ENCODE measurements at regions of chr12 and their contacts with region 1.

Region 1: GRCh38 chr12:110826592-110827200 is 20.1 kb upstream of the CCDC63 start:
- DNase-seq: peak; percentile 84 to 92 (median 90)
- ATAC-seq: peak; percentile 99
- H3K4me3 ChIP-seq: peak overlapping the region; percentile 17; the same call in 1 of the 2 replicates
- H3K27ac ChIP-seq: no peak overlapping the region; the same call in 2 of the 3 replicates
- H3K4me1 ChIP-seq: peaks cover 4% of the 10 kb centered on the region in 2 experiments; a peak in 2 of 5 replicates
- H3K27me3 ChIP-seq: peaks cover 9 to 42% of the 10 kb centered on the region in 2 experiments; a peak in 3 of 5 replicates
- CTCF ChIP-seq: peak; percentile 99
- EP300 ChIP-seq: no peak
- POLR2A ChIP-seq: no peak
- RAD21 ChIP-seq: peak; percentile 97 to 98

Region 2: DNA sequence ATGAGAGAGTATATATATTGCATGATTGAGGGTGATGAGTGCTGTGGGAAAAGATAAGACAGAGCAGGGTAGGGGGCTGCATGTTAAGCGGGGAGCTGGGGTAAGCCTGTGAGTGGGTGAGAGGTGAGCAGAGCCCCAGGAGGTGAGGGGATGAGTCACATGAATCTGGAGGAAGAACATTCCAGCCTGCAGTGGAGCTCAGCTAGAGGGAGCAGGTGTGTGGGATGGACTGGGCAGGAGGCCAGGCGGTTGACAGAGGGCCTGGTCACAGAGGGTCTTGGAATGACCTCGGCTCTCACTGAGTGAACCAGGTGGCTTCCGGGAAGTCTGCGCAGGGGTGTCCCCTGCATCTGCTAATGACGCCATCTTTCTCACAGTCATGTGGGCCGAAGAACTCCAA is 874.9 kb before region 1 on chr12:
- CTCF ChIA-PET with region 1: no interaction called
- POLR2A ChIA-PET with region 1: no interaction called
- in situ Hi-C with region 1: no loop called
- intact Hi-C with region 1: no loop called
- DNase-seq: no peak
- ATAC-seq: no peak
- H3K4me3 ChIP-seq: no peak overlapping the region
- H3K27ac ChIP-seq: no peak overlapping the region
- H3K4me1 ChIP-seq: no peaks in the 10 kb centered on the region
- H3K27me3 ChIP-seq: no peaks in the 10 kb centered on the region
- CTCF ChIP-seq: no peak
- EP300 ChIP-seq: no peak
- POLR2A ChIP-seq: no peak
- RAD21 ChIP-seq: no peak

Region 3: DNA sequence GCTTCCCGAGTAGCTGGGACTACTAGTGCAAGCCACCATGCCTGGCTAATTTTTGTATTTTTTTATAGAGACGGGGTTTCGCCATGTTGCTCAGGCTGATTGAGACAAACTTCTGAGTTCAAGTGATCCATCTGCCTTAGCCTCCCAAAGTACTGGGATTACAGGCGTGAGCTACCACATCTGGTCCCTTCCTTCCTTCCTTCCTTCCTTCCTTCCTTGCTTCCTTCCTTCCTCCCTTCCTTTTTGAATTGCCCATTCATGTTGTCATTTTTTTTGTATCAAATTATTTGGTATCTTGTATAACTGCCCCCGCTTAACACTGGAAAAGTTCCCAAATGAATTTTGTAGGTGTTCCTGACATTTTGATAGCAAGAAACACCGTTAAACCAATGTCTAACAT is 312.9 kb before region 1 on chr12:
- CTCF ChIA-PET with region 1: interaction called, 5 read pairs
- POLR2A ChIA-PET with region 1: no interaction called
- in situ Hi-C with region 1: no loop called
- intact Hi-C with region 1: loop called (anchors 5 kb)
- DNase-seq: no peak
- ATAC-seq: no peak
- H3K4me3 ChIP-seq: no peak overlapping the region
- H3K27ac ChIP-seq: no peak overlapping the region
- H3K4me1 ChIP-seq: no peaks in the 10 kb centered on the region; a peak in 1 of 5 replicates
- H3K27me3 ChIP-seq: no peaks in the 10 kb centered on the region
- CTCF ChIP-seq: no peak
- EP300 ChIP-seq: no peak
- POLR2A ChIP-seq: no peak
- RAD21 ChIP-seq: no peak

Region 4: GRCh38 chr12:110613771-110614684 is 212.7 kb before region 1 on chr12 and contains the start of gene TCTN1:
- CTCF ChIA-PET with region 1: no interaction called
- POLR2A ChIA-PET with region 1: no interaction called
- in situ Hi-C with region 1: loop called (anchors 10 kb)
- intact Hi-C with region 1: loop called (anchors 5 kb)
- DNase-seq: peak; percentile 96 to 98 (median 98)
- ATAC-seq: peak; percentile 99
- H3K4me3 ChIP-seq: peak within 1 kb of the TSS; percentile 49
- H3K27ac ChIP-seq: peak within 1 kb of the TSS; percentile 11; the same call in 2 of the 3 replicates
- H3K4me1 ChIP-seq: peaks cover 3 to 14% of the 10 kb centered on the region in 2 experiments; a peak in 4 of 5 replicates
- H3K27me3 ChIP-seq: no peaks in the 10 kb centered on the region
- CTCF ChIP-seq: no peak
- EP300 ChIP-seq: no peak
- POLR2A ChIP-seq: peak; percentile 83
- RAD21 ChIP-seq: no peak
- polyA plus RNA-seq, gene TCTN1: 0.32 to 0.98 TPM

Region 5: GRCh38 chr12:110647631-110648040 is 179.1 kb before region 1 on chr12:
- CTCF ChIA-PET with region 1: interaction called, 4 read pairs
- POLR2A ChIA-PET with region 1: no interaction called
- in situ Hi-C with region 1: no loop called
- intact Hi-C with region 1: loop called (anchors 1 kb)
- DNase-seq: no peak
- ATAC-seq: no peak
- H3K4me3 ChIP-seq: no peak overlapping the region
- H3K27ac ChIP-seq: no peak overlapping the region
- H3K4me1 ChIP-seq: no peaks in the 10 kb centered on the region
- H3K27me3 ChIP-seq: peaks cover 10 to 29% of the 10 kb centered on the region in 2 experiments; a peak in 4 of 5 replicates
- CTCF ChIP-seq: no peak
- EP300 ChIP-seq: no peak
- POLR2A ChIP-seq: no peak
- RAD21 ChIP-seq: no peak

Region 6: DNA sequence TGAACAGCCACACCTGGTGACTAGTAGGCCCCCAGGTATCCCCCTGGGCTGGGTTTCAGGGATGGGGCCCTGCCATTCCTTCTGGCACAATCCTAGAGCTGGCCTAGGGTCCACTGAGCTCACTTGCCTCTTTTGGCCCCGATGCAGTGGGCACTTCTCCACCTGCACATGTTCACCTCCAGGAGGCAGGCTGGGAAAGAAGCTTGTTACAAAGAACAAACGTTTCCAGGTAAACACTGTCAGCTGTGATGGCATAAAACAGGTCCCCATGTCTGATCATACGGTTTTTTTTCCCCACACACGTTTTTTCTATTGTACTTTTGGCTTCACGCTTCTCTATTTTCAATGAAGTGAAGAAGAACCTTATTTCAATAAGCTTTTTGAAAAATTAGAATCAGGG is 121.9 kb before region 1 on chr12:
- CTCF ChIA-PET with region 1: interaction called, 5 read pairs
- POLR2A ChIA-PET with region 1: no interaction called
- in situ Hi-C with region 1: no loop called
- intact Hi-C with region 1: loop called (anchors 1 kb)
- DNase-seq: no peak
- ATAC-seq: peak; percentile 79
- H3K4me3 ChIP-seq: no peak overlapping the region
- H3K27ac ChIP-seq: no peak overlapping the region
- H3K4me1 ChIP-seq: peaks cover 6 to 7% of the 10 kb centered on the region in 2 experiments; a peak in 4 of 5 replicates
- H3K27me3 ChIP-seq: no peaks in the 10 kb centered on the region
- CTCF ChIP-seq: peak; percentile 40 to 51 (median 47)
- EP300 ChIP-seq: no peak
- POLR2A ChIP-seq: no peak
- RAD21 ChIP-seq: peak in 1 of 2 experiments; percentile 47; a peak in 2 of 4 replicates

Region 7: DNA sequence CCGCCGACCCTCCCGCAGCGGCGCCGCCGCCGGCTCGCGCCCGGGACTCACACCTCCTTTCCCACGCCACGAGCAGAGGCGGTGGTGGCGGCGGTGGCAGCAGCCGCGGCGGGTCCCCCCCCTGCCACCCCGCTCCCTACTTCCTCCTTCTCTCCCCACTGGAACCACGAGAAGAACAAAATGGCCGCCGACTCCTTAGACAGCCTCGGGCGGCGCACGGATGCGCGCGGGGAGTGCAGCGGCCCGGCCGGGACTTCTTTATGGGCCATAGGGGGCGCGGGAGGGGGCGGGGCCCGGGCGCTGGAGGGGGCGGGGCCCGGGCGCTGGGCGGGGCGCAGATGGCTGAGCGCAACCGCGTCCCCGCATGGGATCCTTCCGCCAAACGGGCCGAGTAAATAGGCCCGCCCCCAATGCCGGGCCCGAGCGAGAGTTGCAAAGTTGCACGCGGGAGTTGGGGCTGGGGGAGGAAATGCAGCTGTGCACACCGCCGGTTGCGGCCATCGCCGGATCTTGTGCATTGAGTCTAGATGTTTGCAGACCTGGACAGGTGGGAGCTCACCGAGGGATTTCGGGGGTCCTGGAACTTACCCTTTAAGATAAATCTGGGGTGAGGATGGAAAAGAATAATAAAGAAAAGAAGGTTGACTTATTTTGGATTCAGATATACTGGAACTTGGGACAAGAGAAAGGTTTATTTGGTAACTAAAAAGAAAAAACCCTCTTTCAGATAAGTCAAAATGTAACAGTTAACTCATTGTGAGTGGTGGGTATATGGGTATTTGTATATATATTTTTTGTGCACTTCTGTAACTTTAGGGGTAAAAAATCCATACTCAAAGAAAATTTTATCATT is 83.8 kb before region 1 on chr12 and contains the start of gene PPP1CC:
- CTCF ChIA-PET with region 1: no interaction called
- POLR2A ChIA-PET with region 1: interaction called, 4 read pairs
- in situ Hi-C with region 1: no loop called
- intact Hi-C with region 1: loop called (anchors 5 kb)
- DNase-seq: peak; percentile 94 to 96 (median 95)
- ATAC-seq: peak; percentile 85
- H3K4me3 ChIP-seq: peak within 1 kb of the TSS; percentile 85
- H3K27ac ChIP-seq: peak within 1 kb of the TSS; percentile 87
- H3K4me1 ChIP-seq: peaks cover 16 to 25% of the 10 kb centered on the region in 2 experiments
- H3K27me3 ChIP-seq: no peaks in the 10 kb centered on the region
- CTCF ChIP-seq: no peak
- EP300 ChIP-seq: no peak
- POLR2A ChIP-seq: peak; percentile 92
- RAD21 ChIP-seq: no peak
- polyA plus RNA-seq, gene PPP1CC: 67.4 to 76.3 TPM